ENCODE measurements at regions of chr19 and their contacts with region 1.

Region 1: DNA sequence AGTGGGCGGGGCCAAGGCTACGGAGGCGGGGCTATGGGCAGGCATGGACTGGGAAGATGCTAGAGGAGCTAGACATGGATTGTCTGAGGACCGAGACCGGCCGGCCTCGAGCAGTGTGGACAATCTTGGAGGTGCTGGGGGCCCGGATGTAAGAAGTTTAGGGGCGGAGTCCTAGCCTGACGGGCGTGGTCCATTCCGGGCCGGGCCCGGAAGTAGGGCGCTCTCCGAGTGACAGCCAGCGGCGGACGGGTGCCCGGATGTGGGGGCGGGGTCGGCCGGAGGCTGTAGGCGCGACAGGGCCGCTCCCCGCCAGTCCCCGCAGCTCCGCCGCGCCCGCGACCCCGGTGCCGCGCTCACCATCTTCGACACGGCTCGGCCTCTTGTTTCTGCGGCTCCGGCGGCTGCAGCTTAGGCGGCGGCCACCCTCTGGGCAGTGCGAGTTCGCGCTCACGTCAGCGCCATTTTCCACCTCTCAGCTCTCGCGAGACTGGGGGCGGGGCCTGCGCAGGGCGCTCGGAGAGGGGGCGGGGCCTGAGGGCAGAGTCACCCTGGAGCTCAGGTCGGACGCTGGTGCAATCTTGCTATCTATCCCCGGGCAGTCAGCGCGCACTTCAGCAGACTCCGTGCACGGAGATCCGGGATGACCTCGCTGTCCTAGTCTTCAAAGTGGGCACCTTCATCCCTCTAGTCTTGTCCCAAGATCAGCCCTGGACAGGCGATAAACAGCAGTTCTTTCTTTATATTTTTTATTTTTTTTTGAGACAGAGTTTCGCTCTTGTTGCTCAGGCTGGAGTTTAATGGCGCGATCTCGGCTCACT is at the start of gene ZNF414:
- DNase-seq: peak; percentile 100
- ATAC-seq: peak; percentile 80
- H3K4me3 Mint-ChIP-seq: peak within 1 kb of the TSS; percentile 96
- H3K27ac Mint-ChIP-seq: peak within 1 kb of the TSS; percentile 96
- H3K4me1 Mint-ChIP-seq: peaks cover 41% of the 10 kb centered on the region
- H3K27me3 Mint-ChIP-seq: no peaks in the 10 kb centered on the region
- total RNA-seq, gene ZNF414: 38.2 to 40.5 TPM

Region 2: GRCh38 chr19:8174706-8175105 is 339.2 kb before region 1 on chr19:
- POLR2A ChIA-PET with region 1: interaction called, 10 read pairs
- DNase-seq: no peak
- ATAC-seq: no peak
- H3K4me3 Mint-ChIP-seq: no peak overlapping the region
- H3K27ac Mint-ChIP-seq: no peak overlapping the region
- H3K4me1 Mint-ChIP-seq: no peaks in the 10 kb centered on the region
- H3K27me3 Mint-ChIP-seq: peaks cover 5% of the 10 kb centered on the region

Region 3: GRCh38 chr19:8412783-8413628 is 100.9 kb before region 1 on chr19 and contains the start of gene MARCHF2:
- POLR2A ChIA-PET with region 1: interaction called, 27 read pairs
- DNase-seq: peak; percentile 96
- ATAC-seq: peak; percentile 100
- H3K4me3 Mint-ChIP-seq: peak within 1 kb of the TSS; percentile 77
- H3K27ac Mint-ChIP-seq: peak within 1 kb of the TSS; percentile 4
- H3K4me1 Mint-ChIP-seq: peaks cover 6% of the 10 kb centered on the region
- H3K27me3 Mint-ChIP-seq: no peaks in the 10 kb centered on the region
- total RNA-seq, gene MARCHF2: 23.9 to 25.0 TPM

Region 4: GRCh38 chr19:8487137-8487851 is 26.6 kb before region 1 on chr19:
- POLR2A ChIA-PET with region 1: interaction called, 24 read pairs
- DNase-seq: peak; percentile 68
- ATAC-seq: peak; percentile 83
- H3K4me3 Mint-ChIP-seq: peak overlapping the region; percentile 68
- H3K27ac Mint-ChIP-seq: peak overlapping the region; percentile 86
- H3K4me1 Mint-ChIP-seq: peaks cover 28% of the 10 kb centered on the region
- H3K27me3 Mint-ChIP-seq: no peaks in the 10 kb centered on the region

Region 5: DNA sequence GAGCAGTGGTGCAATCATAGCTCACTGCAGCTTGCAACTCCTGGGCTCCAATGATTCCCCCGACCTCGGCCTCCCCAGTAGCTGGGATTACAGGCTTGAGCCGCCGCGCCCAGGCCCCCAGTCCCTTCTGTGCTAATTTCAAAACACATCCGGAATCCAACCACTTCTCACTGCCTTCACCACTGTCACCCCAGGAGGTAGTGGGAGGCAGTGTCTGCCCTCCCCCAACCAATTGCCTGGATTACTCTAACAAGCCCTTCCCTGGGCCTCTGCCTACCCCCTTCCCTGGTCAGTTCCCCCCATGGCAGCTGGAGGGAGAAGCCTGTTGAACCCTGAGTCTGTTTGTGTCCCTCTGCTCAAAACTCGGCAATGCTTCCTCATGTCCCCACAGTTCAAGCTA is 13.7 kb before region 1 on chr19:
- POLR2A ChIA-PET with region 1: interaction called, 40 read pairs
- DNase-seq: no peak
- ATAC-seq: peak; percentile 15
- H3K4me3 Mint-ChIP-seq: no peak overlapping the region
- H3K27ac Mint-ChIP-seq: peak overlapping the region; percentile 67
- H3K4me1 Mint-ChIP-seq: peaks cover 19% of the 10 kb centered on the region
- H3K27me3 Mint-ChIP-seq: peaks cover 2% of the 10 kb centered on the region

Region 6: GRCh38 chr19:8569066-8569771 is 55.3 kb after region 1 on chr19:
- POLR2A ChIA-PET with region 1: interaction called, 60 read pairs
- DNase-seq: peak; percentile 72
- ATAC-seq: peak; percentile 91
- H3K4me3 Mint-ChIP-seq: peak overlapping the region; percentile 83
- H3K27ac Mint-ChIP-seq: peak overlapping the region; percentile 97
- H3K4me1 Mint-ChIP-seq: peaks cover 62% of the 10 kb centered on the region
- H3K27me3 Mint-ChIP-seq: no peaks in the 10 kb centered on the region

Region 7: DNA sequence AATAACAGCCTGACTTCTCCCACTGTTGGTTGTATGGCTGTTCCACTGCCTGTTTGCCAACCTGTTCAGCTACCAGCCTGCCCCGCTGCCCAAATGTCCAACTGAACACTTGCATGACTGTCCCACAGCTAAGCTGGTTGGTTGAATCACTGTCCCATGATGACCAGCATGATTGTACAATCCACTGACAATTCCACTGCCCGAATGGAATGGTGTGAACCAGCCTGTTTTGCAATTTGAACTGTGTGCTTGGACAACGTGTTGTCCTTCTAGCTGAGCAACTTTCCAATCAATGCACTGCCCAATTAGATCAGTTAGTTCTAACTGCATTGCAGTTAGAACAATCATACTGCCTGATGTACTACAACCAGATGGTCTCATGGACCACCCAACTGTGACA is 87.9 kb after region 1 on chr19:
- POLR2A ChIA-PET with region 1: no interaction called
- DNase-seq: no peak
- ATAC-seq: no peak
- H3K4me3 Mint-ChIP-seq: no peak overlapping the region
- H3K27ac Mint-ChIP-seq: no peak overlapping the region
- H3K4me1 Mint-ChIP-seq: no peaks in the 10 kb centered on the region
- H3K27me3 Mint-ChIP-seq: no peaks in the 10 kb centered on the region